Sigmoid colon (tissue), 7 donors: ENCODE measurements at regions of chr11 and their contacts with region 1.

Region 1: DNA sequence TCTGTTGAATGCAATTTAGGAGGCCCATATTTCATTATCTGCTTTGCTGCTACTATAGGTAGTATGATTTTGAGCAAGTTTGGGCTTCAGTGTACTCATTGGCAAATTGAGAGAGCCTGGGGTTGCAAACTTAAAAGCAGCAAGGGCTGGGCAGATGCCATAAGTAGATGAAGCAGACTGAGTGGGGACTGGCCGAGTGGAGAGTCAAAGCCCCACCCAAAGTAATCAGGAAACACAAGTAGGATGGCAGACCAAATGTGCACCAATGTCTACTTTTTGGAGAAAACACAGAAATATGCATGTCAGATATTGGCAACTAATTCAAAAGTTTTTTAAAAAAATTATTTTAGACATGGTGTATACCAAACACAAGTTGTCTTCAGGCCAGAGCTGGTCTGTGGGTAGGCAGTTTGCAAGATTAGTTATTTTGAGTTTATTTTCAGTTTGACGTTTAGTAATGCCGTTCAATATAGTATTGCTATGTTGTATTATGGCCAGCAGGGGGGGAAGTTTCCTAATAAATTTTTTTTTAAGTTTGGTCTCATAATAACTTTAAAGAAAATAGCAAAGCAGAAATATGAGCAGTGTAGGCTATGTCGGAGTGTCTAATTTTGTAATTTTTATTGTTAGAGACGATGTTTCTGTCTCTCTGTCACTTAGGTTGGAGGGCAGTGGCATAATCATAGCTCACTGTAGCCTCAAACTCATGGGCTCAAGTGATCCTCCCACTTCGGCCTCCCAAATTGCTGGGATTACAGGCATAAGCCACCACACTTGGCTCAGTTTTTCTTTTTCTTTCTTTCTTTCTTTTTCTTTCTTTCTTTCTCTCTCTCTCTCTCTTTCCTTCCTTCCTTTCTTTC is 105.1 kb downstream of the HIPK3 start:
- DNase-seq: no peak
- H3K4me3 ChIP-seq: no peak overlapping the region
- H3K27ac ChIP-seq: no peak overlapping the region
- H3K4me1 ChIP-seq: no peaks in the 10 kb centered on the region
- H3K27me3 ChIP-seq: no peaks in the 10 kb centered on the region
- CTCF ChIP-seq: peak; percentile 12 to 73 (median 38)
- EP300 ChIP-seq: no peak
- POLR2A ChIP-seq: no peak

Region 2: DNA sequence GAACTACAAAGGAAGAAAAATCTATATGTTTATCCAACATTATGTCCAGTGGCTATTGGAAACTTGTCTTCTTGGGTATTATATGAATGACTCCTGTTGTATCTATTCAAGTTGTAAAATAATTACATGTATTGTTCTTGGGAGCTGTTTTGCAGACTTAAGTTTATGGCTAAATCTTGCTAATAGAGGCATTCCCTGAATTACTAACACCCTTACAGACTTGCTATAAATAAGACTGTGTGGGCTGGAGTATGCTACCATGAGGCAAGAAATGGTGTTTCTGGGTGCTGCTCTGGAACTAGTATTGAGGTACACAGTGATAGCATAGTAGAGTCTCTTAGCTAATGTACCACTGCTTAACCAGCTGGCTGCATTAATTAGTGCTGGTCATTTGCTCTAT is 50.0 kb after region 1 on chr11:
- intact Hi-C with region 1: no loop called
- DNase-seq: no peak
- H3K4me3 ChIP-seq: no peak overlapping the region
- H3K27ac ChIP-seq: no peak overlapping the region
- H3K4me1 ChIP-seq: no peaks in the 10 kb centered on the region
- H3K27me3 ChIP-seq: peaks cover 0 to 7% (median 0%) of the 10 kb centered on the region in 3 donors
- CTCF ChIP-seq: no peak
- EP300 ChIP-seq: no peak
- POLR2A ChIP-seq: no peak

Region 3: DNA sequence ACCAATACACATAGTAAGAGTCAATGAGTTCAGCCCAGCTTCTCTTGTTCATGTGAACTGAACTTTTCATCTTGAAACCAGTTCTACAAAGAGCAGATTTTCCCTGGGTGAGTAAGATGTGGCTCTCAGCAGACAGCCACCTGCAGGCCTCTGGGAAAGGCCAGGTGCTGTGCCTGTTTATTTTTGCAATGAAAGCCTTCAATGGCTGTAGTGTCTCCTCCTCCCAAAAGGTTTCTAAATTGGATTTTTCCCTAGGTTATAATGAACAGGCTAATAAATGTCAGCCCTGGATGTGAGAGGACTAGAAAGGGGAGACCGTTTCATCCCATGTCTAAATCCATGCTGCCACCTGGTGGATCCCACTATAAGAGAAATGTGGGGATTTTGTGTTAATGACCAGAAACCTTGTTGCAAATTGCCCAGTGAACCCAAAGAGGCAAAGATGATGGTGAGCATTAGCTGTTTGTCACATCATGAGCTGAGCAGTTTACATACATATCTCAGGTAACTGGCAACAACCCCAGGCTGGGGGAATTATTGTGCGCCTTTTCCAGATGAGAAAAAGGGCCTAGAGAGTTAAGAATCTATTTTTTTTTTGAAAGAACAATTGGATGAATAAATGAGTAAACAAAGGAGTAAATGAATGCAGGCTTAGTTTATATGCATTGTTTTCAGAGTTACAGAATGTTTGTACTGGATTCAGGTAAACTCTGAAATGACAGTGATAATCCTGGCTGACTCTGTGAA is 325.6 kb after region 1 on chr11:
- intact Hi-C with region 1: loop called (anchors 5 kb)
- DNase-seq: no peak
- H3K4me3 ChIP-seq: no peak overlapping the region
- H3K27ac ChIP-seq: no peak overlapping the region
- H3K4me1 ChIP-seq: peaks cover 0 to 24% (median 20%) of the 10 kb centered on the region in 4 donors
- H3K27me3 ChIP-seq: peaks cover 0 to 4% (median 0%) of the 10 kb centered on the region in 3 donors
- CTCF ChIP-seq: peak in 2 of 4 experiments; percentile 38 to 46
- EP300 ChIP-seq: no peak
- POLR2A ChIP-seq: no peak

Region 4: DNA sequence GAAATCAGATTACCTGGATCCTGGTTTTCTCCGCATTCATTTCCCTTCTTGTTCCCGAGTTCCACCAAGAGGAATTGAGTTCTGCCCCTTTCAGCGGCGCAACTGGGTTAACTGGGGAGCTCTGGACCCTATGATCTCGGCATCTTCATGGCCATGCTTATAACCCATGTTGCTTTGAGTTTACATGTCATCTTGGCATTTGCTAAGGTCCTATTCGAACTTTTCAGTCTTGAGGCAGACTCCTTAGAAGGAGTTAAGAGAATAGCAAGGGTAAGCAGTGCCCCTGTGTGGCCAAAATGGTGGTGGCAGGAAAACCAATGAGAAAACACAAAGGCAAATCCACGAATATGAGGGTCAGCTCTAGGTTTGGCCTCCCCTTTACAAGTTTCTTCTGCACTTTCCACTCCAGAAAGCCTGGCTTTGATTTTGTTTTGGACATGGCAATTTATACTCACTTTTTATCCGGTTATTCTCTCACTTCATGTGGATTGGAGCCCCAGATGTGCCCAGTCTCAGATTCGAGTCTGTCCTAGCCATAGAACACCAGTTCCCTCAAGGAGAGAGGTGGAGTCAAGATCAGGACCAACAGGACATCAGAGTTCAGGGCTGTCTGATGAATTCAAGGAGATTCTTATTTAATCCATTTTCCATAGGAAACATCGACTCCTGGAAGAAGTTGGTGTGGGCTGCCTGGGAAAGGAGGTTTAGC is 467.3 kb after region 1 on chr11:
- intact Hi-C with region 1: loop called (anchors 5 kb)
- DNase-seq: no peak
- H3K4me3 ChIP-seq: peak overlapping the region; percentile 16 to 49 (median 42)
- H3K27ac ChIP-seq: no peak overlapping the region
- H3K4me1 ChIP-seq: peaks cover 0 to 9% (median 8%) of the 10 kb centered on the region in 4 donors
- H3K27me3 ChIP-seq: peaks cover 8 to 41% (median 16%) of the 10 kb centered on the region in 3 donors
- CTCF ChIP-seq: peak; percentile 43 to 76 (median 70)
- EP300 ChIP-seq: no peak
- POLR2A ChIP-seq: no peak